Breast epithelium (tissue), 4 donors: ENCODE measurements at regions of chr13 and their contacts with region 1.

Region 1: GRCh38 chr13:28531077-28531844 is 36.3 kb upstream of the FLT1 start:
- DNase-seq: no peak
- H3K4me3 ChIP-seq: peak overlapping the region; percentile 42 to 71 (median 56)
- H3K27ac ChIP-seq: peak overlapping the region in 1 of 2 donors; percentile 41
- H3K4me1 ChIP-seq: peaks cover 0 to 5% of the 10 kb centered on the region in 2 donors
- H3K27me3 ChIP-seq: peaks cover 0 to 9% of the 10 kb centered on the region in 2 donors
- CTCF ChIP-seq: no peak
- POLR2A ChIP-seq: no peak

Region 2: GRCh38 chr13:28623782-28624706 is 92.8 kb after region 1 on chr13:
- intact Hi-C with region 1: loop called (anchors 10 kb)
- DNase-seq: no peak
- H3K4me3 ChIP-seq: no peak overlapping the region
- H3K27ac ChIP-seq: no peak overlapping the region
- H3K4me1 ChIP-seq: no peaks in the 10 kb centered on the region
- H3K27me3 ChIP-seq: no peaks in the 10 kb centered on the region
- CTCF ChIP-seq: no peak
- POLR2A ChIP-seq: no peak